Caki2 (cell line): ENCODE measurements at regions of chr12 and their contacts with region 1.

Region 1: GRCh38 chr12:56589783-56590182 is 40.3 kb downstream of the BAZ2A start:
- DNase-seq: no peak

Region 2: DNA sequence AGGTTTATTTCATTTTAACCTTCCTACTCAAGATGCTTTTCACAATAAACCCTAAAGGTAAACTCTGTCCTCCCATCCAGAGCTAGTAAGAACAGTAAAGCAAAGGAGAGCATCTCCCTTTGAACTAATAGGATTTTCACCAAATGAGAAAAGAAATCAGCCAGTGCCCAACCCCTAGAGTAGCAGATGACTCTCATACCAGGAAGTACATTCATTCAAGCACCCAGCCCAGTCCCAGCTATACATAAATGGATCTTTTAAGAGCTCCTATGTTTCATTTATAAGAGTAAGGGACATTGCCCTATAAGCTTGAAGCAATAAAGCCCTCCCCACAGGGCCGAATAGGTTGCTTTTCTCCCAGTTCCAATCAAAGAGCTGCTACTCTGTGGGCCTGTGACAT is 32.8 kb after region 1 on chr12:
- in situ Hi-C with region 1: loop called (anchors 5 kb)
- DNase-seq: no peak